ENCODE measurements at regions of chr1 and their contacts with region 1.

Region 1: DNA sequence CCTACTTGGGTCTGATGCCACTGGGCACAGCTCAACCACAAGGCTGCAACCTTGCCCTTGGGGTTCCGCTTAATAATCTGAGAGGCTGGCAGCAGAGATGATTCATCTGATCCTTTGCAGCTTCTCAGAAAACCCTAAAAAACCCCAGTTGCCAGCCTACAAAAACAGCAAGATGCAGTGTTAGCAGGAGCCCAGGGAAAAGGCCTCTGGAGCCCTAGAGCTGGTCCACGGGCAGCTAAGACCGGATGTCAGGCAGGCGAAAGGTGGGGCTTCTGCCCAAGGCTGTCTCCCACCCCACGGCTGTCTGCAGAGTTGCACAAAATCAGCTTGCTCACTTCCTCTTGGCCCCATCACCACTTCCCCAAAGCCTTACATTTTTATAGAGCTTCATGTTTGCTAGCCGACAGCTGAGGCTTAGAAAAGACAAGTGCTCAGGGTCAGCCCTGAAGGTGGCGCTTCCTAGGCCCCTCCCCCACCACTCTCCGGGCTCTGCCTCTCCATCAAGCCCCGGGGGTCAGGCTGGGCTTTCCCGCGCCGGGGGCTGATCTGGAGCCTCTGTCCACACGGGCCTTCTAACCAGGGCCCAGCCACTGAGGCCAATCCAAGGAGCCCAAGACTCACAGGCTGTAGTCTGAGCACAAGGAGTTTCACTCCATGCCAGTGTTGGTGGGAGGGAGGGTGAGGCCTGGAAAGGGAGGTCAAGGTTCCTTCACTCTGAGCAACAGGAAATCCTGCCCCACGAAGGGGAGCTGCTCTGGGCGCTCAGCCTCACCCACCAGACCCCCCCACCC is 4.2 kb upstream of the ADORA3 start:
- DNase-seq: peak; percentile 82
- ATAC-seq: peak; percentile 66
- H3K4me3 Mint-ChIP-seq: peak overlapping the region; percentile 69
- H3K27ac Mint-ChIP-seq: peak overlapping the region; percentile 92
- H3K4me1 Mint-ChIP-seq: peaks cover 57% of the 10 kb centered on the region
- H3K27me3 Mint-ChIP-seq: no peaks in the 10 kb centered on the region

Region 2: GRCh38 chr1:111417755-111418154 is 89.9 kb before region 1 on chr1:
- CTCF ChIA-PET with region 1: no interaction called
- POLR2A ChIA-PET with region 1: no interaction called
- DNase-seq: no peak
- ATAC-seq: no peak
- H3K4me3 Mint-ChIP-seq: no peak overlapping the region
- H3K27ac Mint-ChIP-seq: no peak overlapping the region
- H3K4me1 Mint-ChIP-seq: peaks cover 3% of the 10 kb centered on the region
- H3K27me3 Mint-ChIP-seq: peaks cover 3% of the 10 kb centered on the region

Region 3: GRCh38 chr1:111448918-111449702 is 58.5 kb before region 1 on chr1 and contains the starts of genes ATP5PB and WDR77:
- CTCF ChIA-PET with region 1: interaction called, 34 read pairs
- POLR2A ChIA-PET with region 1: interaction called, 14 read pairs
- DNase-seq: peak; percentile 96
- ATAC-seq: peak; percentile 97
- H3K4me3 Mint-ChIP-seq: peak within 1 kb of the TSS; percentile 100
- H3K27ac Mint-ChIP-seq: peak within 1 kb of the TSS; percentile 99
- H3K4me1 Mint-ChIP-seq: peaks cover 76% of the 10 kb centered on the region
- H3K27me3 Mint-ChIP-seq: no peaks in the 10 kb centered on the region
- total RNA-seq, gene ATP5PB: 396 to 404 TPM
- total RNA-seq, gene WDR77: 54.3 to 57.8 TPM

Region 4: GRCh38 chr1:111489604-111490003 is 18.0 kb before region 1 on chr1:
- CTCF ChIA-PET with region 1: interaction called, 66 read pairs
- POLR2A ChIA-PET with region 1: interaction called, 6 read pairs
- DNase-seq: no peak
- ATAC-seq: no peak
- H3K4me3 Mint-ChIP-seq: no peak overlapping the region
- H3K27ac Mint-ChIP-seq: no peak overlapping the region
- H3K4me1 Mint-ChIP-seq: no peaks in the 10 kb centered on the region
- H3K27me3 Mint-ChIP-seq: no peaks in the 10 kb centered on the region

Region 5: GRCh38 chr1:111582644-111583618 is 75.3 kb after region 1 on chr1:
- CTCF ChIA-PET with region 1: interaction called, 16 read pairs
- POLR2A ChIA-PET with region 1: interaction called, 7 read pairs
- DNase-seq: no peak
- ATAC-seq: no peak
- H3K4me3 Mint-ChIP-seq: no peak overlapping the region
- H3K27ac Mint-ChIP-seq: no peak overlapping the region
- H3K4me1 Mint-ChIP-seq: no peaks in the 10 kb centered on the region
- H3K27me3 Mint-ChIP-seq: no peaks in the 10 kb centered on the region

Region 6: DNA sequence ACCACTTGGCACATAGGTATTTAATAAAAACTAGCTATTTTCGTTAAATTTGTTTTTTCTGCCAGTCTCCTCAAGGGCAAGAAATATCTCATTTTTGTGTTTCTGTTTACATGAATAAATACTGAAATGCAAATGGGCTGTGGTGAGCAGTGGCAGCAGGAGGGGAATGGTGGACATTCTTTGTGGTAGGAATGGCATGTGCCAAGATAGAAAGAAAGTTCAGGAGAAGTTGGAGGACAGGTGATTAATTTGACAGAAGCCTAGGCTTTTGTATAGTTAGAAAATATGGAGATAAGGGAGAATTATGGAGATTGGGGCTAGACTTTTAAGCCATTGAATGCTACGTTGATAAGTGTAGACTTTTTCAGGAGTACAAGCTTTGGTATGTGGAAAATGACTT is 120.5 kb after region 1 on chr1:
- CTCF ChIA-PET with region 1: interaction called, 48 read pairs
- POLR2A ChIA-PET with region 1: interaction called, 8 read pairs
- DNase-seq: no peak
- ATAC-seq: no peak
- H3K4me3 Mint-ChIP-seq: peak overlapping the region; percentile 11
- H3K27ac Mint-ChIP-seq: peak overlapping the region; percentile 40
- H3K4me1 Mint-ChIP-seq: peaks cover 78% of the 10 kb centered on the region
- H3K27me3 Mint-ChIP-seq: no peaks in the 10 kb centered on the region

Region 7: GRCh38 chr1:111696330-111696729 is 188.7 kb after region 1 on chr1:
- CTCF ChIA-PET with region 1: interaction called, 31 read pairs
- POLR2A ChIA-PET with region 1: interaction called, 3 read pairs
- DNase-seq: no peak
- ATAC-seq: no peak
- H3K4me3 Mint-ChIP-seq: no peak overlapping the region
- H3K27ac Mint-ChIP-seq: peak overlapping the region; percentile 31
- H3K4me1 Mint-ChIP-seq: peaks cover 23% of the 10 kb centered on the region
- H3K27me3 Mint-ChIP-seq: no peaks in the 10 kb centered on the region

Region 8: GRCh38 chr1:111755331-111756123 is 247.9 kb after region 1 on chr1 and contains the start of gene DDX20:
- CTCF ChIA-PET with region 1: interaction called, 79 read pairs
- POLR2A ChIA-PET with region 1: interaction called, 15 read pairs
- DNase-seq: peak; percentile 94
- ATAC-seq: peak; percentile 89
- H3K4me3 Mint-ChIP-seq: peak within 1 kb of the TSS; percentile 93
- H3K27ac Mint-ChIP-seq: peak within 1 kb of the TSS; percentile 99
- H3K4me1 Mint-ChIP-seq: peaks cover 57% of the 10 kb centered on the region
- H3K27me3 Mint-ChIP-seq: no peaks in the 10 kb centered on the region
- total RNA-seq, gene DDX20: 18.1 to 18.9 TPM